CD4-positive, alpha-beta memory T cell (primary cell): ENCODE measurements at regions of chr10 and their contacts with region 1.

Region 1: DNA sequence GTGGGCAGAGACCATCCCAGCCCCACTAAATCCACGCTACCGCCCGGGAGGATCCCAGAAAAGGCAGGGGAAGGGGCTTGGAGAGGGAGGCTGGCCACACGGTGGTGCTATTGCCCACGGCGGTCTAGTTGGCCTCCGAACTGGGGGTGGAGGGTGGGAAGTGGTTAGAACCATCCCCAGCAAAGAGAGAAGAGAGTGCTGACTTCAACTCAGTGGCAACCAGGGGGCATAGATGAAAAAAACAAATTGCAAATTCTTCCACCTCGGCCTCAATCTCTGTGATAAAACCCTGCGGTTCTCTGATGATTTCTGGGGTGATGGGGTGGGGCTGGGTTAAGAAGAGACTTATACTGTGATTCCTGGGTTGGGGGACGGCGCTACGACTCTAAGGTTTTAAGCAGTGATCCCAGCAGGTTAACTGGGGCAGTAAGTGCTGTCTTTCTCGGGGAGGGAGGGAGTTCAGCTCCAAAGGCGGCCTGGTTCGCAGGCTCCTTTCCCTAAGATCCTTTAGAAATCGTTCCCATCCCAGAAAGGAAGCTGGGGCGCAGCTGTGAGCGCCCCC is 154.5 kb upstream of the LYZL2 start:
- DNase-seq: peak; percentile 80 to 83 (median 82)
- H3K4me3 ChIP-seq: peak overlapping the region; percentile 30 to 53
- H3K4me3 Mint-ChIP-seq: peak overlapping the region; percentile 74 to 92 (median 86)
- H3K27ac ChIP-seq: peak overlapping the region; percentile 12
- H3K27ac Mint-ChIP-seq: peak overlapping the region; percentile 28 to 95 (median 83)
- H3K4me1 ChIP-seq: peaks cover 28% of the 10 kb centered on the region
- H3K4me1 Mint-ChIP-seq: peaks cover 7 to 33% (median 20%) of the 10 kb centered on the region in 4 donors
- H3K27me3 ChIP-seq: no peaks in the 10 kb centered on the region
- H3K27me3 Mint-ChIP-seq: no peaks in the 10 kb centered on the region

Region 2: GRCh38 chr10:30600005-30600404 is 184.0 kb before region 1 on chr10:
- CTCF ChIA-PET with region 1: no interaction called
- POLR2A ChIA-PET with region 1: no interaction called
- intact Hi-C with region 1: no loop called
- DNase-seq: no peak
- H3K4me3 ChIP-seq: no peak overlapping the region
- H3K4me3 Mint-ChIP-seq: no peak overlapping the region
- H3K27ac ChIP-seq: no peak overlapping the region
- H3K27ac Mint-ChIP-seq: no peak overlapping the region
- H3K4me1 ChIP-seq: no peaks in the 10 kb centered on the region
- H3K4me1 Mint-ChIP-seq: no peaks in the 10 kb centered on the region
- H3K27me3 ChIP-seq: no peaks in the 10 kb centered on the region
- H3K27me3 Mint-ChIP-seq: peaks cover 4 to 6% of the 10 kb centered on the region in 2 donors

Region 3: DNA sequence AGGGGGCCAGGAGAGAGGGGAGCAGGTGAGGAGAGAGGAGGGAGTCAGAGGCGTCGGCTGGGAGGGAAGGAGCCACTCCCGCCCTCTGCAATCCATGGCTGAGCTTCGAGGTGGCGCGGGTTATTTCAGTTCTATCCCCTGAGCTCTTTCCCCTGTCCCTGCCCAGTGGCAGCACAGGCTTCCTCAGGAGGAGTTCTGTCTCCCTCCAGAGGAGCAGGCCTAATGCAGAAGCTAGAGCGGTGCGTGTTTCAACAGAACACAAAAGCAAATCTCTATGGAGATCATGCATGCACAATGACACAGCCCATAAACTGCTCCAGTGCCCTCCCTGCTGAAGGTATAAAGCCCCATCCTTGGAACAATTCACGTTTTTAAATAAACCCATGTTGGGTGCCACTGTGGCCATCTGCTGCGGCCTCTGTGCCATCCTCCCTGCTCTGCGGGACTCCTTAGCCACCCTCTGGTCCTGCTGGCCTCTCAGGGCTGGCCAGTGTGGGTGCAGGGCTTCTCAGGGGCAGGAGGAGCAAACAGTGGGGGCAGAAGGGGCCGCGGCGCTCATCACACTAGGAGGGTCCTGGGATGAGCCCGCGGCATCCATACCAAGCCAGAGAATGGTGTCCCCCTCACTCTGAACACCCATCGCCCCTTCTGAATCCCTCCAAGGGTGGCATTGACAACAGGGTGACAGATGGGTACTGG is 38.1 kb after region 1 on chr10:
- CTCF ChIA-PET with region 1: interaction called, 16 read pairs
- POLR2A ChIA-PET with region 1: interaction called, 5 read pairs
- intact Hi-C with region 1: loop called (anchors 2 kb)
- DNase-seq: no peak
- H3K4me3 ChIP-seq: no peak overlapping the region
- H3K4me3 Mint-ChIP-seq: no peak overlapping the region
- H3K27ac ChIP-seq: no peak overlapping the region
- H3K27ac Mint-ChIP-seq: peak overlapping the region in 1 of 7 donors; percentile 13
- H3K4me1 ChIP-seq: no peaks in the 10 kb centered on the region
- H3K4me1 Mint-ChIP-seq: no peaks in the 10 kb centered on the region
- H3K27me3 ChIP-seq: no peaks in the 10 kb centered on the region
- H3K27me3 Mint-ChIP-seq: peaks cover 3 to 6% of the 10 kb centered on the region in 2 donors

Region 4: DNA sequence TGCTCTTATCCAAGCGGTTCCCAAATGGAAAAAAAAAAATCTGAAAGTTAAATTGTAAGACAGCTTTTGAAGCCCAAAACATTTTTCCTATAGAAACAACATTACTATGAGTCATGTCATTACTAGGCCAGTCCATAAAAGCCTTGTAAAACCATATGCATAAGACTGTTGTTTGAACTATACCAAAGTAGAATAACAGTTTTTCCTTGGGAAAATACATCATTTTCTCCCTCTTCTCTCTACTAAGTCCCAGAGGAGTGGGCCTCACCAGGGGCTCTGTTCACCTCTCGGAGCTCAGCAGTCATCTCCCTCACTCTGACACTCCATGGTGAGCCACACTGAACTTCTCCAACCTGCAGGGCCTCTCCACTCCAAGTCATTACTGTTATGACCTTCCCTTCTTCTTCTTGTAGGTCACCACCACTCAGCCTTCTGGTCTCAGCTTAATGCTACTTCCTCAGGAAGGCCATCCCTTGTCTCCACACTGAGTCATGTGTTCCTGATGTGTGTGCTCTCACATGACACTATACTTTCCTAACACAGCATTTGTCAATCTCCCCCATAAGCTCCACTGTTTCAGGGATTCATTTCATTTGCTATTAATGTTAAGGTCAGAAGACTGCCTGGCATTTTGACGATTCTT is 215.2 kb after region 1 on chr10:
- CTCF ChIA-PET with region 1: interaction called, 14 read pairs
- POLR2A ChIA-PET with region 1: interaction called, 5 read pairs
- intact Hi-C with region 1: no loop called
- DNase-seq: peak in 1 of 5 donors; percentile 7
- H3K4me3 ChIP-seq: peak overlapping the region in 1 of 2 donors; percentile 31
- H3K4me3 Mint-ChIP-seq: peak overlapping the region; percentile 64 to 83 (median 81)
- H3K27ac ChIP-seq: peak overlapping the region; percentile 44
- H3K27ac Mint-ChIP-seq: peak overlapping the region; percentile 66 to 95 (median 88)
- H3K4me1 ChIP-seq: peaks cover 19% of the 10 kb centered on the region
- H3K4me1 Mint-ChIP-seq: peaks cover 20 to 38% (median 28%) of the 10 kb centered on the region in 4 donors
- H3K27me3 ChIP-seq: no peaks in the 10 kb centered on the region
- H3K27me3 Mint-ChIP-seq: no peaks in the 10 kb centered on the region

Region 5: GRCh38 chr10:31318854-31319601 is 535.0 kb after region 1 on chr10 and contains the start of gene ZEB1:
- CTCF ChIA-PET with region 1: interaction called, 8 read pairs
- POLR2A ChIA-PET with region 1: interaction called, 11 read pairs
- intact Hi-C with region 1: loop called (anchors 1 kb)
- DNase-seq: peak; percentile 91 to 97 (median 92)
- H3K4me3 ChIP-seq: peak within 1 kb of the TSS; percentile 55 to 74
- H3K4me3 Mint-ChIP-seq: peak within 1 kb of the TSS; percentile 97 to 100 (median 99)
- H3K27ac ChIP-seq: peak within 1 kb of the TSS; percentile 88
- H3K27ac Mint-ChIP-seq: peak within 1 kb of the TSS; percentile 94 to 100 (median 99)
- H3K4me1 ChIP-seq: peaks cover 30% of the 10 kb centered on the region
- H3K4me1 Mint-ChIP-seq: peaks cover 24 to 53% (median 38%) of the 10 kb centered on the region in 4 donors
- H3K27me3 ChIP-seq: no peaks in the 10 kb centered on the region
- H3K27me3 Mint-ChIP-seq: no peaks in the 10 kb centered on the region
- total RNA-seq, gene ZEB1: 68.7 to 70.6 TPM

Region 6: GRCh38 chr10:31770307-31770902 is 986.4 kb after region 1 on chr10:
- CTCF ChIA-PET with region 1: interaction called, 56 read pairs
- POLR2A ChIA-PET with region 1: interaction called, 5 read pairs
- intact Hi-C with region 1: loop called (anchors 1 kb)
- DNase-seq: peak; percentile 50 to 54 (median 51)
- H3K4me3 ChIP-seq: no peak overlapping the region
- H3K4me3 Mint-ChIP-seq: no peak overlapping the region
- H3K27ac ChIP-seq: no peak overlapping the region
- H3K27ac Mint-ChIP-seq: no peak overlapping the region
- H3K4me1 ChIP-seq: no peaks in the 10 kb centered on the region
- H3K4me1 Mint-ChIP-seq: no peaks in the 10 kb centered on the region
- H3K27me3 ChIP-seq: no peaks in the 10 kb centered on the region
- H3K27me3 Mint-ChIP-seq: no peaks in the 10 kb centered on the region

Region 7: DNA sequence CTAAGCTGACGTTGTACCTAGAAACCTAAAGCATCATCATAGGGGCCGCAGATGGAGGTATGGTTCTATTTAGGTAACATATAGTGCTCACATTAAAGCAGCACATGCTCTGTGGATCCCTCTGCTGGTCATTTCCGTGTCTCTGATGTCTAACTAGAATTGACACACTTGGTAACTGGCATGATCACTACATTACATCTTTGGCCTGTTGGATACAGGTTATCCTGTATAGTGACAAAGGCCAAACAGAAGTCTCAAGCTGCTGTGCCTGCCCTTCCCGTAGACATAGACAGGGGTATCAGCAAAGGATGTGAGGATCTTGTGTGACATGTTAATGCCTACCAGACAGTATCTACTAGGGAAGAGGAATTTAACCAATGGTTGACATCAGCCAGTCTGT is 1221.0 kb after region 1 on chr10:
- CTCF ChIA-PET with region 1: no interaction called
- POLR2A ChIA-PET with region 1: no interaction called
- intact Hi-C with region 1: loop called (anchors 1 kb)
- DNase-seq: peak in 4 of 5 donors; percentile 28 to 39 (median 36)
- H3K4me3 ChIP-seq: no peak overlapping the region
- H3K4me3 Mint-ChIP-seq: no peak overlapping the region
- H3K27ac ChIP-seq: no peak overlapping the region
- H3K27ac Mint-ChIP-seq: peak overlapping the region in 3 of 7 donors; percentile 13 to 25 (median 14)
- H3K4me1 ChIP-seq: no peaks in the 10 kb centered on the region
- H3K4me1 Mint-ChIP-seq: peaks cover 2 to 12% (median 9%) of the 10 kb centered on the region in 4 donors
- H3K27me3 ChIP-seq: no peaks in the 10 kb centered on the region
- H3K27me3 Mint-ChIP-seq: no peaks in the 10 kb centered on the region